Dorsolateral prefrontal cortex (tissue), 120 donors: ENCODE measurements at regions of chr10 and their contacts with region 1.

Region 1: DNA sequence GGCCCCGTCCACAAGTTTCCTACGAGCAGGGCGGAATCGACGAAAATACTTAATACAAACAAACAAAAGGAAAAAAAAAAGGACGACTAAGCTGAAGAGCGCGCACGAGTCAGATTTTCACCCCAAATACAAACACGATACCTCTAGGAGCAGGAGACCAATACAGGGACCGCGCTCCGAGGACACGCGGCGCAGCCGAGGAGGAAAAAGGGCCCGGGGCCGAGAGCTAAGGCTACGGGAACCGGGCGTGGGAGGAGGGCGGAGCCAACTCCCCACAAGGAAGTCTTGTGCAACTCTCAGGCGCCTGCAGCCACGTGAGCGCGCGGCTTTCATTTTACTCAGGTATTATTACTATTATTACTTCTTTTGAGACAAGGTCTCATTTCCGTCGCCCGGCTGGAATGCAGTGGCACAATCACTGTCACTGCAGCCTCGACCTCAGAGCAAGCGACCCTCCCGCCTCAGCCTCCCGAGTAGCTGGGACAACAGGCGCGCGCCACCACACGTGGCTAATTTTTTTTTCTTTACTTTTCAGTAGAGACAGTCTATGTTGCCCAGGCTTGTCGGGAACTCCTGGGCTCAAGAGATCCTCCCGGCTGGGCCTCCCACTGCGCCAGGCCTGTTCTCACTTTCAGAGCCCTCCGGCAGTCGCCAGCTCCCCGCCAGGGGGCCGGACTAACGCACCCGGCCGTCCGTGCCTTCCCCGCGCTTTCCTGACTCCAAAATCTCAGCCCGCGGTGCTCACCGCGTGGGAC is 1.2 kb downstream of the HNRNPF start:
- DNase-seq: peak; percentile 61 to 90 (median 81)
- H3K4me3 ChIP-seq: peak overlapping the region; percentile 57 to 97 (median 82)
- H3K27ac ChIP-seq: peak overlapping the region; percentile 55 to 100 (median 97)
- H3K27me3 ChIP-seq: no peaks in the 10 kb centered on the region
- CTCF ChIP-seq: peak in 24 of 56 donors; percentile 4 to 40 (median 23)

Region 2: DNA sequence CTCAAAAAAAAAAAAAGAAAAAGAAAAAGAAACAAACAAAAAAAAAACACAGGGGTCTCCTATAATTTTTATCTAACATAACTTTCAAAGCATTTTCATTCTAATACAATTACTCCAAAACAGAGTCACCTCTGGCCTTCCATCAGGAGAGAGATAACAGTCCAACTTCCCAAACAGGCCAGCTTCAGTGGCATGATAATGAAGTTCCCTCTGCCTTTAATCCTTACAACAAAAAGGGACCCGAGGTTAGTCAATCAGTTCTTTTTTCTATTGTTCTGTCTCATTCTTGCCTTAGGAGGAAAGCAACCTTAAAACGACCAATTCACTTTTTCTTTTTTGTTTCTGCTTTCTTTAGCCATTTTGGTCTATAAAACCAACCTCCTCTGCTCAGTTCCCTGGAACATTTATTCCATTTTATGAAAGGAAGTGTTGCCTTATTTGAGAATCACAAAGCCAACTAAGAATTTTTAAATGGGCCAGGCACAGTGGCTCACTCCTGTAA is 52.8 kb before region 1 on chr10:
- intact Hi-C with region 1: loop called in 1 of 2 experiments (anchors 5 kb)
- DNase-seq: no peak
- H3K4me3 ChIP-seq: no peak overlapping the region
- H3K27ac ChIP-seq: peak overlapping the region in 49 of 59 donors; percentile 13 to 95 (median 73)
- H3K27me3 ChIP-seq: no peaks in the 10 kb centered on the region
- CTCF ChIP-seq: no peak

Region 3: GRCh38 chr10:43396928-43397624 is 10.7 kb before region 1 on chr10:
- intact Hi-C with region 1: loop called (anchors 1 kb)
- DNase-seq: peak; percentile 75 to 90 (median 85)
- H3K4me3 ChIP-seq: peak overlapping the region; percentile 55 to 91 (median 80)
- H3K27ac ChIP-seq: peak overlapping the region; percentile 81 to 99 (median 97)
- H3K27me3 ChIP-seq: no peaks in the 10 kb centered on the region
- CTCF ChIP-seq: peak in 16 of 56 donors; percentile 7 to 38 (median 15)

Region 4: GRCh38 chr10:43420369-43421200 is 12.8 kb after region 1 on chr10:
- intact Hi-C with region 1: loop called (anchors 1 kb)
- DNase-seq: peak; percentile 65 to 93 (median 80)
- H3K4me3 ChIP-seq: peak overlapping the region; percentile 47 to 88 (median 74)
- H3K27ac ChIP-seq: peak overlapping the region; percentile 94 to 100 (median 99)
- H3K27me3 ChIP-seq: no peaks in the 10 kb centered on the region
- CTCF ChIP-seq: peak in 50 of 56 donors; percentile 6 to 66 (median 47)

Region 5: DNA sequence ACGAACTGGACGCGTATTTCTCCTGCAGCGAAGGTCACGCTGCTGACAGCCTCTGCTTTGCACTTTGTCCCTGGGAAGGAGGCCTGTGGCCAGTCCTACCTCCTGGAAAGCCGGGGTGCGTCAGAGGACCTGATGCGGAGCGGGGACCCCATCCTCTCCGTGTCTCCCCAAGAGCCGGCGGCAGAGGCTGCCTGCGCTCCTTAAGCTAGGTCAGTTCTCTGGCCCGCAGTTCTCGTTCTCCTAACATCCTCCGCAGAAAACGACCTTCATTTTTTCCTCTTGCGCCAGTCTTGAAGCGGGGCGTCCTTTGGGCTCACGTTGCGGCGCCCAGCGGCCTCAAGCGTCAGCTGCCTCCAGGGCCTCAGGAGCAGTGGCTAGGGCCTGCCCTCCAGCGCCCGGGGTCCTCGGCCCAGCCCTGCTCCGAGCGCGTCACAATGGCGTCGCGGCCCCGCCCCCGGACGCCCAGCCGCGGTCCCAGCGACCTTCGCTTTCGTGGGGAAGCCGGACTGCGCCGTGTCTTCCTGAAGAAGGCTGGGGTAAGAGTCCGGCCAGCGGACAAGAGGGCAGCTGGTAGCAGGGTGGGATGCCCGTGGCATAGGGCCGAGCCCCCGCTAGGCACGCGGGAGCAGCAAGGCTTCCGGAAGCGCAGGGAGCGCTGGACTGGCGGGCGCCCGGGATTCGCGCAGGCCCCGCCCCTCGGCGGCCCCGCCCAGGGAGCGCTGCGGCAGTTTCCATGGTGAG is 28.8 kb after region 1 on chr10 and contains the start of gene ZNF487:
- intact Hi-C with region 1: loop called in 1 of 2 experiments (anchors 1 kb)
- DNase-seq: peak; percentile 72 to 93 (median 84)
- H3K4me3 ChIP-seq: peak within 1 kb of the TSS; percentile 61 to 99 (median 92)
- H3K27ac ChIP-seq: peak within 1 kb of the TSS; percentile 87 to 100 (median 98)
- H3K27me3 ChIP-seq: no peaks in the 10 kb centered on the region
- CTCF ChIP-seq: peak in 47 of 56 donors; percentile 12 to 66 (median 36)
- total RNA-seq, gene ZNF487: 12.0 to 31.9 (median 20.8) TPM